ENCODE measurements at regions of chr14 and their contacts with region 1.

Region 1: DNA sequence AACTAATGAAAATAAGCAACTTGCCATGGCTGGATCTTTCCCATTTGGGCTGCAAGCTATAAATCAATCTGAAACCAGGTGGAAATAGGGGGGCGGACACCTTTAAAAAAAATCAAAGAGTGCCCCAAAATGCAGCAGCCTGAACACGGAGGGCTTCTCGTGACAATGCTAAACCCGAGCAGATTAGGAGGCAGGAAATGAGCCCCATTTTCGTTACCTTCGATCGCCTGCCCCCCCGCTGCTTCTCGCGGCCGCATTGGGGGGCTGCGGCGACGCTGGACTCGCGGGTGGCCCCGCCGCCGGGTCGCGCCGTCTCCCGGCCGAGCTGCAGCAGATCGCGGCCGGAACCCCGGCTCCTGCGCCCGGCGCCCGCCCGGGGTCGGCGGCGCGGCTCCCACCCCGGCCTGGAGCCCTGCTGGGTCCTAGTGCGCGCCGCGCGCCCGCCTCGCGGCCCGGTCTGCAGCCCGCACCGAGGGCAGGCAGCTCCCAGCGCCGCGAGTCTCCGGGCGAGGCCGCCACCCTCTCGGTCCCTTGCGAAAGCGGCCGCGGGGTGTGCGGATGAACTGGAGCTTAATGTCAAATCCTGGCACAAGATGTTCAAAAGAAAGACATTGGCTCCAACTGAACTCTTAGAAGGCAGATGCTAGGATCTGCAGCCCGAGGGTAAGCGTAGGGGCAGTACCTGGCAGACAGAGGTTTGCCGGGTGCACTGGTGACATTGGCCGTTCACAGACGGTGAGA is 201.9 kb upstream of the FOXN3 start:
- DNase-seq: peak; percentile 74
- ATAC-seq: peak; percentile 33
- H3K4me3 Mint-ChIP-seq: peak overlapping the region; percentile 90
- H3K27ac Mint-ChIP-seq: peak overlapping the region; percentile 98
- H3K4me1 Mint-ChIP-seq: peaks cover 65% of the 10 kb centered on the region
- H3K27me3 Mint-ChIP-seq: no peaks in the 10 kb centered on the region
- CTCF ChIP-seq: no peak

Region 2: GRCh38 chr14:89399594-89400068 is 219.3 kb before region 1 on chr14:
- CTCF ChIA-PET with region 1: no interaction called
- POLR2A ChIA-PET with region 1: no interaction called
- intact Hi-C with region 1: no loop called
- DNase-seq: peak; percentile 11
- ATAC-seq: no peak
- H3K4me3 Mint-ChIP-seq: no peak overlapping the region
- H3K27ac Mint-ChIP-seq: no peak overlapping the region
- H3K4me1 Mint-ChIP-seq: peaks cover 71% of the 10 kb centered on the region
- H3K27me3 Mint-ChIP-seq: no peaks in the 10 kb centered on the region
- CTCF ChIP-seq: no peak

Region 3: GRCh38 chr14:89430391-89431236 is 188.4 kb before region 1 on chr14:
- CTCF ChIA-PET with region 1: interaction called, 3 read pairs
- POLR2A ChIA-PET with region 1: interaction called, 24 read pairs
- intact Hi-C with region 1: no loop called
- DNase-seq: peak; percentile 71
- ATAC-seq: peak; percentile 79
- H3K4me3 Mint-ChIP-seq: peak overlapping the region; percentile 79
- H3K27ac Mint-ChIP-seq: peak overlapping the region; percentile 100
- H3K4me1 Mint-ChIP-seq: peaks cover 71% of the 10 kb centered on the region
- H3K27me3 Mint-ChIP-seq: no peaks in the 10 kb centered on the region
- CTCF ChIP-seq: no peak

Region 4: GRCh38 chr14:89681086-89682018 is 62.4 kb after region 1 on chr14:
- CTCF ChIA-PET with region 1: no interaction called
- POLR2A ChIA-PET with region 1: interaction called, 16 read pairs
- intact Hi-C with region 1: loop called (anchors 1 kb)
- DNase-seq: peak; percentile 83
- ATAC-seq: peak; percentile 79
- H3K4me3 Mint-ChIP-seq: peak overlapping the region; percentile 63
- H3K27ac Mint-ChIP-seq: peak overlapping the region; percentile 90
- H3K4me1 Mint-ChIP-seq: peaks cover 46% of the 10 kb centered on the region
- H3K27me3 Mint-ChIP-seq: no peaks in the 10 kb centered on the region
- CTCF ChIP-seq: no peak

Region 5: GRCh38 chr14:89767861-89768268 is 148.9 kb after region 1 on chr14:
- CTCF ChIA-PET with region 1: interaction called, 5 read pairs
- POLR2A ChIA-PET with region 1: interaction called, 3 read pairs
- intact Hi-C with region 1: loop called (anchors 5 kb)
- DNase-seq: peak; percentile 79
- ATAC-seq: peak; percentile 90
- H3K4me3 Mint-ChIP-seq: peak overlapping the region; percentile 50
- H3K27ac Mint-ChIP-seq: peak overlapping the region; percentile 89
- H3K4me1 Mint-ChIP-seq: peaks cover 30% of the 10 kb centered on the region
- H3K27me3 Mint-ChIP-seq: no peaks in the 10 kb centered on the region
- CTCF ChIP-seq: peak; percentile 82

Region 6: DNA sequence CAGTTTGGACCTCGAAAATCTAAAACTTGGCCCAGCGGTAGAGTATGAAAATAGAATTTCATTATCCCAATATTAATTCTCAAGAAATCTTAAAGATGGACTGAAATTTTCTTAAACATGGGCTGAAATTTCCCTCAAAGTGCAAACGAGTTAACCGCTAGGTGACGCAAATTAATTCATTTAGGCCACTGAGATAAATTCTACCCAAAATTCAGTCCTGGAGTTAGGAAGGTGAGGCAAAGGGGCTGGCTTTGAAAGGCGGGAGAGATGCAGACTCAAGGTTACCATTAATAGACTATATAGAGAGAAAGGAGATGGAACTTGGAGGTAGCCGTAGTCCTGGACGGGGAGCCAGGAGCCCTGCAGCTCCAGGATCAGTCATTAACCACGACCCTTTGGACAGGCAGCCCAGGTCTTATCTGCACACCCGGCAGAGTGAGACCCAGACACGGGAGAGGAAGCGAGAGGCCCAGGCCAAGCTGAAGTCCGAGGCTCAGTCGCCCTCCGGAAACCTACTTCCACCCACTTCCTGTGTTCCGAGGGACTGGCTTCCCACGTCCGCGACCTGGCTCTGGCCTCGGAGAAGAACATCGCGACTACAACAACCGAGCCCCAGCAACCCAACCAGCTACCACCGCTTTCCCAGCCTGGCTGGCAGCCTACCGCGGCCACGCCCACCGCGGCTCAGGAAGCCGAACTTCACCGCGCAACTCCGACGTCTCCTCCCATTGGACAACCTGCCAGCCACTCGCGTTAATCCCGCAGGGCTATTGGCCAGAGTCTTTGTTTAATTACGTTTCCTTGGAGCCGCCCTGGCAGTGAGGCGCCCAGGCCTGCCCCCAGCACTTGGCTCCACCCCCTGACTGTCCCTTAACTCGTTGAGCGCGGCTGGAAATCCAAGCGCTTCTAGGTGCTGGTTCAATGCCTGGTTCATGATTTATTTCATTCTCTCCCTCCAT is 335.4 kb after region 1 on chr14 and contains the start of gene EFCAB11:
- CTCF ChIA-PET with region 1: no interaction called
- POLR2A ChIA-PET with region 1: no interaction called
- intact Hi-C with region 1: loop called (anchors 5 kb)
- DNase-seq: peak; percentile 97
- ATAC-seq: peak; percentile 86
- H3K4me3 Mint-ChIP-seq: peak within 1 kb of the TSS; percentile 92
- H3K27ac Mint-ChIP-seq: peak within 1 kb of the TSS; percentile 92
- H3K4me1 Mint-ChIP-seq: peaks cover 31% of the 10 kb centered on the region
- H3K27me3 Mint-ChIP-seq: no peaks in the 10 kb centered on the region
- CTCF ChIP-seq: no peak
- total RNA-seq, gene EFCAB11: 6.6 to 8.4 TPM